ENCODE measurements at regions of chr4 and their contacts with region 1.

Region 1: GRCh38 chr4:139295206-139295941 is 5.9 kb upstream of the NAA15 start:
- DNase-seq: peak; percentile 94 to 100 (median 99)
- ATAC-seq: peak; percentile 91
- H3K4me3 ChIP-seq: peak overlapping the region; percentile 65 to 91
- H3K4me3 Mint-ChIP-seq: peak overlapping the region; percentile 91
- H3K27ac ChIP-seq: peak overlapping the region; percentile 74 to 87
- H3K27ac Mint-ChIP-seq: peak overlapping the region; percentile 95
- H3K4me1 ChIP-seq: peaks cover 31% of the 10 kb centered on the region
- H3K4me1 Mint-ChIP-seq: peaks cover 37% of the 10 kb centered on the region
- H3K27me3 ChIP-seq: no peaks in the 10 kb centered on the region
- H3K27me3 Mint-ChIP-seq: no peaks in the 10 kb centered on the region
- CTCF ChIP-seq: peak; percentile 77

Region 2: GRCh38 chr4:139229534-139230039 is 65.8 kb before region 1 on chr4:
- CTCF ChIA-PET with region 1: interaction called, 12 read pairs
- POLR2A ChIA-PET with region 1: no interaction called
- intact Hi-C with region 1: loop called (anchors 1 kb)
- DNase-seq: peak in 3 of 9 experiments; percentile 7 to 74 (median 64)
- ATAC-seq: peak; percentile 70
- H3K4me3 ChIP-seq: no peak overlapping the region
- H3K4me3 Mint-ChIP-seq: no peak overlapping the region
- H3K27ac ChIP-seq: no peak overlapping the region
- H3K27ac Mint-ChIP-seq: no peak overlapping the region
- H3K4me1 ChIP-seq: no peaks in the 10 kb centered on the region
- H3K4me1 Mint-ChIP-seq: no peaks in the 10 kb centered on the region
- H3K27me3 ChIP-seq: no peaks in the 10 kb centered on the region
- H3K27me3 Mint-ChIP-seq: no peaks in the 10 kb centered on the region
- CTCF ChIP-seq: peak; percentile 72

Region 3: DNA sequence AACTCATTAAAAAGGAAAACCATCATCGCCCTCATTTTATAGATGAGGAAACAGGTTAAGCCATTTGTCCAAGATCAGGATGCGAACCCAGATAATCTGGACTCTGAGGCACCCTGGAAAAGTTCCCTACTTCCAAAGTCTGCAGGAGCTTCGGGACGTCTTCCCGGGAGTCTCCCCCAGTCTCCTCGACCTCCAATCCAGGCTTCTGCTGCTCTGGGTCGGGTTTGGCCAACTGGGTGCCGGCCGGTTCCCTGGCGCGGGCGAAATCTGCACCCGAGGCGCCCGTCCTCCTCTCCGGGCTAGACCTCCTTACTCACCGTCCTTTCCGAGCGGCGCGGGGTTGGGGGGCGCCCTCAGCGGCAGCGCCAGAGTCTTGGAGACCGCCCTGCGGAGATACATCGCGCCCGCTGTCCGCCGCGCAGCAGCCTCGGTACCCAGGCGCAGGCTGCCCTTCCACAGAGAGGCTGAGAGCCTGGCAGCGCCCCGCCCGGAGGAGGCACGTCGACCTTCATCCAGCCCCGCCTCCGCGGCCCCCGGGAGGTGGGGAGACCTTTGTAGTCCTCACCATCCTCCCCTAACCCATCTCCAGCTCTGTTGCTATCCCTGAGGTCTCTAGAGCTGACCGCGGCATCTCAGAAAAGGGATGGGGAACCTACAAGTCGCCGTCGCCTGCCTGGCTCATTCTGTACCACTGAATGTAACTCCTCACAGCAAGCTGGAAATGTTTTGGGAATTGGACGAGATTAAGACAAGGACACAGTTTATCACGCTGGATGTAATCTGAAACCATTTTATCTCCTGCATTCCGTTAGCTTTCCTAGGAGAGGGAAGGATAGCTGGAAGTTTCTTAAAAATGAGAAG is 15.4 kb before region 1 on chr4 and contains the start of gene MGARP:
- CTCF ChIA-PET with region 1: interaction called, 15 read pairs
- POLR2A ChIA-PET with region 1: no interaction called
- intact Hi-C with region 1: no loop called
- DNase-seq: peak in 6 of 9 experiments; percentile 7 to 50 (median 28)
- ATAC-seq: peak; percentile 69
- H3K4me3 ChIP-seq: peak within 1 kb of the TSS; percentile 46 to 59
- H3K4me3 Mint-ChIP-seq: peak within 1 kb of the TSS; percentile 78
- H3K27ac ChIP-seq: no peak within 1 kb of the TSS
- H3K27ac Mint-ChIP-seq: no peak within 1 kb of the TSS
- H3K4me1 ChIP-seq: peaks cover 20% of the 10 kb centered on the region
- H3K4me1 Mint-ChIP-seq: peaks cover 16% of the 10 kb centered on the region
- H3K27me3 ChIP-seq: peaks cover 19 to 25% of the 10 kb centered on the region in 2 experiments
- H3K27me3 Mint-ChIP-seq: peaks cover 36% of the 10 kb centered on the region
- CTCF ChIP-seq: no peak
- total RNA-seq, gene MGARP: not detected

Region 4: GRCh38 chr4:139794158-139794954 is 499.0 kb after region 1 on chr4:
- CTCF ChIA-PET with region 1: no interaction called
- POLR2A ChIA-PET with region 1: no interaction called
- intact Hi-C with region 1: no loop called
- DNase-seq: no peak
- ATAC-seq: no peak
- H3K4me3 ChIP-seq: no peak overlapping the region
- H3K4me3 Mint-ChIP-seq: no peak overlapping the region
- H3K27ac ChIP-seq: no peak overlapping the region
- H3K27ac Mint-ChIP-seq: no peak overlapping the region
- H3K4me1 ChIP-seq: no peaks in the 10 kb centered on the region
- H3K4me1 Mint-ChIP-seq: no peaks in the 10 kb centered on the region
- H3K27me3 ChIP-seq: no peaks in the 10 kb centered on the region
- H3K27me3 Mint-ChIP-seq: no peaks in the 10 kb centered on the region
- CTCF ChIP-seq: no peak